Posterior cingulate gyrus (tissue), 11 donors: ENCODE measurements at regions of chr10 and their contacts with region 1.

Region 1: GRCh38 chr10:68988530-68989316 is at the start of gene KIFBP:
- DNase-seq: peak; percentile 91 to 99 (median 96)

Region 2: DNA sequence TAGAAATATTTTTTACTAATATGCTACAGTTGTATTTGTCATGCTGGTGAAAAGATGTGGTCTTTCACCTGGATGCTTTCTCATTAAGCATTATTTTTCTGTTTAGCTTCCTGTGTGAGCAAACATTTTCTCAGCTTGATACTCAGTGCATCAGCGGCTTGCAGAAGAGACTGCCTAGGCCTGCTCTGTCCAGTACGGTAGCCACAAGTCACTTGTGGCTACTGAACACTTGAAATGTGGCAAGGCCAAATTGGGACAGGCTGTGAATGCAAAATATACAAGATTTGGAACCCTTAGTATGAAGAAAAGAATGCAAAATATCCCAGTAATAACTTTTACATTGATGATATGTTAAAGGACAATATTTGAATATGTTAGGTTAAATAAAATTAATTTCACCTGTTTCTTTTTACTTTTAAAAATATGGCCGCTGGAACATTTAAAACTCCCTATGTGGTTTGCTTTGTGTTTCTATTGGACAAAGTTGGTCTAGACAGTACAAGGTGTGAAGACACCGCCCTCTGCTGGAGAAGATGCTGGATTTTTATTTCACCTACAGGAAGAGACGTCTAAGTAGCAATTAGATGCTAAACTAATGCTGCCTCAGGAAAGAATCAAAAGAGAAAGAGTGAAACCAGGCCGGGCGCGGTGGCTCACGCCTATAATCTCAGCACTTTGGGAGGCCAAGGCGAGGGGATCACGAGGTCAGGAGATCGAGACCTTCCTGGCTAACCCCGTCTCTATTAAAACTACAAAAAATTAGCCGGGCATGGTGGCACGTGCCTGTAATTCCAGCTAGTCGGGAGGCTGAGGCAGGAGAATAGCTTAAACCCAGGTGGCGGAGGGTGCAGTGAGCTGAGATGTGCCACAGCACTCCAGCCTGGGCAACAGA is 104.5 kb after region 1 on chr10:
- intact Hi-C with region 1: loop called (anchors 5 kb)
- DNase-seq: peak in 5 of 10 donors; percentile 14 to 46 (median 40)

Region 3: DNA sequence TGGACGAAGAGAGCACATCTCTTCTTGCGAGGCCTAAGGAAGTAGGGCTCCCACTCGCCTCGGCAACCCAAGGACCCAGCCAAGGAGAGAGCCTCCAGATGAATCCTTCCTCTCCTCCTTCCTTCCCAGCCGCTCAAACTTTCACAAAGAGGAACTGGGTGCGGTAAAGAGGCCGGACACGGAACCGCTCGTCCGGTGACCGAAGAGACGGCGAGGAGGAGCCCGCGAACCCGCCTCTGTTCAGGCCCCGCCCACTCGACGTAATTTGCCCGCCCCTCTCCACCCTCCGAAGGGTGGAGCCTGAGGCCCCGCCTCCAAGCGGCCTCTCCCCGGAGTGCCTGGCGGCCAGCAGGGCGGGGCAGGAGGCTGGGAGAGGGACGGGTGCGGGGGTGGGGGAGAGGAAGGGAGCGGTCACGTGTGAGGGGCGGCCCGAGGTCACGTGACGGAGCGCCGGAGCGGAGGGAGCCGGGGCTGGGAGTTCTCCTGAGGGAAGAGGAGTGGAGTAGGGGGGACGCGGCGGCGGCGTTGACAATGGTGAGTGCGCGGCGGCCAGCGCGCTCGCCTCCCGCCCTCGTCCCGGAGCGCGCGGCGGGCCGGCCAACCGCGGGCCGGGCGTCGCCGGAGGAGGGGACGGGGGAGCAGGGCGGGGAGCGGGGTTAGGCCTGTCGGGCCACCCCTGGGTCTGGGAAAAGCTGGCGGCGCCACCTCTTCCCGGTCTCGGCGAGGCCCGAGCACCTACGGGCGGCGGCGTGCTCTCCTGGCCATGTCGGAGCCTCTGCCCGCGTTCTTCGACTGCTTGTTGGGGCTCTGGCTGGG is 135.2 kb after region 1 on chr10 and contains the start of gene VPS26A:
- intact Hi-C with region 1: loop called (anchors 5 kb)
- DNase-seq: peak; percentile 99 to 100 (median 100)

Region 4: GRCh38 chr10:69179743-69180524 is 191.2 kb after region 1 on chr10 and contains the start of gene SUPV3L1:
- intact Hi-C with region 1: loop called (anchors 10 kb)
- DNase-seq: peak; percentile 86 to 99 (median 94)